Heart left ventricle (tissue), 16 donors: ENCODE measurements at regions of chr3 and their contacts with region 1.

Region 1: DNA sequence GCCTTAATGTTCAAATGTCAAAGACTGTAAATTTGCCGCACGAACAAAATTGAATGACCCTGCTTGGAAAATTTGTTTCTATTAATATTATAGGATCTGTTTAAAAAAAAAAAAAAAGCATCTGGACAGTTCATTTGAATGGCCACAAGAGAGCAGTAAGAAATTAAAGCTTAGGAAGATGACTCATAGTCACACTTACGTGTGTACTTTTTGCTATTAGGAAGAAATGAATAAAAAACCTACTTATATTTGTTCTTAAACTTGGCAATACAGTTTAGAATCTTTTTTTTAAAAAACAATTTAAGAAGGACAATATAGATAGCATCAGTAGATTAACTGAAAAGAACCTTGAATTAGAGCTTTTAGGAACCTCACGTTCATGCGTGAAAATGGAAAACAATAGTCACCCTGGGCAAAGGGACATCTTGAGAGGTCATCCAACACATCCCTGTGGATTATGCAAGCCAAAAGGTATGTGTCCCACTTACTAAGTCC is 621.8 kb downstream of the MECOM start:
- DNase-seq: no peak
- ATAC-seq: peak in 2 of 4 donors; percentile 64 to 68
- H3K4me3 ChIP-seq: peak overlapping the region in 5 of 12 donors; percentile 13 to 30 (median 15)
- H3K27ac ChIP-seq: peak overlapping the region in 5 of 12 donors; percentile 19 to 54 (median 34)
- H3K4me1 ChIP-seq: peaks cover 0 to 6% (median 0%) of the 10 kb centered on the region in 12 donors
- H3K27me3 ChIP-seq: no peaks in the 10 kb centered on the region
- CTCF ChIP-seq: peak; percentile 40 to 73 (median 57)
- POLR2A ChIP-seq: no peak

Region 2: DNA sequence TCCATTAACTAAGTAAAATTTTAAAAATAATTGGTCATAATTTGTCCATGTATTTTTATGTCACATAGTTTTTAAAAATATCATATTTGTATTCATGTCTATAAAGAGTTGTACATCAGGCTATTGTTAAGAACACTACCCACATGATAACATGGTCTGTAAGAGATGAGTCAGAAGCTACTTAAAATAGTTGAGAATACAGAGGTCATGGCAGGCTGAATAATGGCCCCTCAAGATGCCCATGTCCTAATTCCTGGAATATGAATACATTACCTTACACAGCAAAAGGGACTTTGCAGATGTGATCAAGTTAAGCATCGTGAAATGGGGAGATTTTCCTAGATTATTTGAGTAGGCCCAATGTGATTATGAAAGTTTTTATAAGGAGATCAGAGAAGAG is 163.1 kb before region 1 on chr3:
- intact Hi-C with region 1: loop called in 1 of 10 experiments (anchors 10 kb)
- DNase-seq: no peak
- ATAC-seq: peak in 2 of 4 donors; percentile 71 to 78
- H3K4me3 ChIP-seq: no peak overlapping the region
- H3K27ac ChIP-seq: peak overlapping the region in 5 of 12 donors; percentile 37 to 76 (median 72)
- H3K4me1 ChIP-seq: peaks cover 0 to 41% (median 7%) of the 10 kb centered on the region in 12 donors
- H3K27me3 ChIP-seq: no peaks in the 10 kb centered on the region
- CTCF ChIP-seq: no peak
- POLR2A ChIP-seq: no peak

Region 3: GRCh38 chr3:169112153-169112892 is 70.6 kb after region 1 on chr3:
- intact Hi-C with region 1: loop called in 1 of 10 experiments (anchors 10 kb)
- DNase-seq: no peak
- ATAC-seq: peak in 1 of 4 donors; percentile 72
- H3K4me3 ChIP-seq: no peak overlapping the region
- H3K27ac ChIP-seq: peak overlapping the region in 11 of 12 donors; percentile 7 to 58 (median 41)
- H3K4me1 ChIP-seq: peaks cover 0 to 19% (median 9%) of the 10 kb centered on the region in 12 donors
- H3K27me3 ChIP-seq: no peaks in the 10 kb centered on the region
- CTCF ChIP-seq: no peak
- POLR2A ChIP-seq: no peak

Region 4: GRCh38 chr3:169195672-169196071 is 153.9 kb after region 1 on chr3:
- intact Hi-C with region 1: no loop called
- DNase-seq: no peak
- ATAC-seq: no peak
- H3K4me3 ChIP-seq: no peak overlapping the region
- H3K27ac ChIP-seq: no peak overlapping the region
- H3K4me1 ChIP-seq: no peaks in the 10 kb centered on the region
- H3K27me3 ChIP-seq: no peaks in the 10 kb centered on the region
- CTCF ChIP-seq: no peak
- POLR2A ChIP-seq: no peak

Region 5: GRCh38 chr3:169676925-169677537 is 635.3 kb after region 1 on chr3:
- intact Hi-C with region 1: loop called in 1 of 10 experiments (anchors 10 kb)
- DNase-seq: no peak
- ATAC-seq: no peak
- H3K4me3 ChIP-seq: no peak overlapping the region
- H3K27ac ChIP-seq: no peak overlapping the region
- H3K4me1 ChIP-seq: no peaks in the 10 kb centered on the region
- H3K27me3 ChIP-seq: peaks cover 0 to 22% (median 0%) of the 10 kb centered on the region in 9 donors
- CTCF ChIP-seq: no peak
- POLR2A ChIP-seq: no peak